Right ventricle myocardium superior (tissue), 1 donor: ENCODE measurements at regions of chr3 and their contacts with region 1.

Region 1: DNA sequence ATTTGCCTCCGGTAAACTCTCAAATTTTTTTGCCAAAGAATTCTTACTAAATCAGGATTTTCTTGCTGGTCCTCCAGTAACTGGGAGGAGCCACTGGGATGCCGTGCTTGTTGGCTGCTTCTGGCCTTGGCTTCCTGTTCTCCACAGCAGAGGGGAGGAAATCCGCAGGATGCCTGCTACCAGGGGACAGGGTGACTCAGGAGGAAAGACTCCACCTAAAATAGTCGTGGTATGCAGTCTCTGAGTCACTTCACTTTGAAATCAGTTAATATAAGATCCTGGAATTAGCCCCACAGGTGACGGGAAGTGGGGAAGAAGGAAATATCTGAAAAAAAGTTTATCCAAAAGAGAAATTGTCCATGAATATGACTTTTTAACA is 6.5 kb upstream of the TM4SF18 start:
- DNase-seq: peak; percentile 85
- ATAC-seq: peak; percentile 92

Region 2: GRCh38 chr3:149291178-149291577 is 48.7 kb before region 1 on chr3:
- intact Hi-C with region 1: no loop called
- DNase-seq: no peak
- ATAC-seq: no peak

Region 3: DNA sequence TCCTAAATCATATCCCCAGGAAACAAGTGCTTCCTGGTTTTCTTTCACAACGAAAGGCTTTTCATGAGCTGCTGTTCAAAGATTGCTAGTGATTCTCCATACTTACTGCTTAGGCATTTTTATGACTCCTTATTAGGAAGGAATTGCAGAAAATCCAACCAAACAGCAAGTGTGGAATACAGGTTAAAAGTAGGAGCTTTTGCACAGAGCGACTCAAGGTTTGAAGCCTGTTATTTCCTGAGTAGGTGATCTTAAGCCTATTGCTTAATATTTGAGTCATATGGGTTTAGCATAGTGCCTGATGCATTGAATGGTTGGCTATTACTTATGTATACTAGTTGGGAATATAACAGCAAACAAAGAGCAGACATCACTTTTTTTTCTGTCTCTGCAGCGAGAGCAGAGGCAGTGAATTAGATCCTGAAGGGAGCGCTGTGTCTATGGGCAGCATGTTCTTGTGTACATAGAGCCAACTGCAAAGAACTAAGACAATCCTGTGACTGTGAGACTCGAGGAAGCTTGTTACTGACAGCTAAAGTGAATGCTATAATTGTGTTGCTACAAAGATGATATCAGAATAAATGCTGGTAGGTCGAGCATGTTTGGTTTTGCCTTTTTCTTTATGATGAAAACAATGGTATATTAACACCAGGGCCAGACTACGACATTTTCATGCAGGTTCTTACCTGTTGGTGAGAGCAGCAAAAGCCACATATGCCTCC is 31.2 kb after region 1 on chr3:
- intact Hi-C with region 1: loop called (anchors 5 kb)
- DNase-seq: no peak
- ATAC-seq: no peak

Region 4: DNA sequence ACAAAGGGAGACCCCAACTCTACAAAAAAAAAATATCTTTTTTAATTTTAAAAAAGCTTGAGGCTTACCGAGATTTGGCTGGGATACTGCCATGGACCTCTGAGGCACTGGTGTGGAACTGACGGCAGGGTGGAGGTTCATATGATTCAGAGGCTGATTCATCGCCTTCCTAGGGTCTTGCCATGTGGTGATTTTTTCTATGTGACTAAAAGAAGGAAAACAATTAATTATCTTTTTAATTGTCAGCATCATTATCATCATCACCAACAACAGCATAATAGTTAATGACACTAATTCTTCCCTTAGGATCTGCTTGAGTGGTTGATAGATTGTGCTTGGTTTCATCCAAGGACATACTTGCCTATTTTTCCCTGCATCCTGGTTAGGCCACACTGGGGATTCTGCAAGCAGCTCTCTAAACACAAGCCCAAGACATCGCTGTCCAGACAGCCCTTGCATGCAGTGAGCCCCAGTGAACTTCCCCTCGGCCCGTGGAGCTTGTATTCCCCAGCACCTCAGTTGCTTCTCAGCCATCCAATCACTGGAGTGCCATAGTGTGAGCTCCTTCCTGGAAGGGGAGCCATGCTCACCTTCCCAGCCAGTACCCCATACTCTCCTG is 233.0 kb after region 1 on chr3:
- intact Hi-C with region 1: no loop called
- DNase-seq: no peak
- ATAC-seq: no peak